ENCODE measurements at regions of chr11 and their contacts with region 1.

Region 1: DNA sequence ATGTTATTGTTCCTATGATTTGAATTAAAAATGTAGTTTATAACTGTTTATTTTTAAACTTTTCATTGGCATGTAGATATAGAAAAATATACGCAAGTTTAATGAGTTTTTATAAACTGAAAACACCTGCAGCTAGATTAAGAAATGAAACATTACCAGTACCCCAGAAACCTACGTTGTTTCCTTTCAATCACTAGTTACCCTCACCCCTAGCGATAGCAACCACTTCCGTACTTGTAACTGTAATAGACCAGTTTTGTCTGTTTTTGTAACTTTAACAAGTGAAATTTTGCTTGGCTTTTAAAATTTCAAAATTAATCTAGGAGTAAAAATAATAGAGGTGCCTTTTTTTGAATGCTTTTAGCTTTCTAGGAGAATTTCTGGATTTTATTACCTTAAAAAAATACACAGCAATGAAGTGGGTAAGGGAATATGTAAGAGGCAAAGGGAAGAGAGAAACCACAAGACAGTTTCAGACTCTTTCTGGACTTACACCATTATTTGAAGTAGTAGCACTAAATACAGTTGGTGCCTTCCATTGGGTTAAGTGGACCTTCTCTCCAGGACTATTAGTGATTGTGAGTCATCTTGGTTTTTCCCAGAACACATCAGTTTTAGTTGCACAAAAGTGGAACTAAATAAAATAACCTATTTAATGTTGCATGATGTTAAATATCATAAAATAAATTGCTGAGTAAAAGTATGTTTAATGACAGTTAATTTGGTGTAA is 18.7 kb upstream of the NAT10 start:
- DNase-seq: no peak
- H3K4me3 Mint-ChIP-seq: peak overlapping the region; percentile 32
- H3K27ac Mint-ChIP-seq: peak overlapping the region; percentile 85
- H3K4me1 Mint-ChIP-seq: peaks cover 15% of the 10 kb centered on the region
- H3K27me3 Mint-ChIP-seq: no peaks in the 10 kb centered on the region

Region 2: DNA sequence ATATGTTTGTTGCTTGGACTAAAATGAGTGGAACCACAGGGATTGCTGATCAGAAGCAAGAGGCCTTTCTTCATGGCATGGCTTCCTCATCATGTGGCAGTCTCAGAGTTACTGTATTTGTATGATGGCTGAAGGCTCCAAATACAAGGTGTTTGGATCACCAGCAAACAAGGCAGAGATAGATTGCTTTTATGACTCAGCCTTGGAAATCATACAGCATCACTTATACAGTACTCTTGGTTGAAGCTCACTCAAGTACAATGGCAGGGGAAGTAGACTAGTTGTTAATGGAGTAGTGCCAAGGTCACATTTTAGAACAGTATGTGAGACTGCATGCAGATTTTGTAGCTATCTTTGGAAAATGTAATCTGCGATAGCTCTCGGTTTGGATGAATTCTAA is 18.6 kb before region 1 on chr11:
- CTCF ChIA-PET with region 1: interaction called, 10 read pairs
- POLR2A ChIA-PET with region 1: no interaction called
- DNase-seq: no peak
- H3K4me3 Mint-ChIP-seq: no peak overlapping the region
- H3K27ac Mint-ChIP-seq: peak overlapping the region; percentile 9
- H3K4me1 Mint-ChIP-seq: peaks cover 54% of the 10 kb centered on the region
- H3K27me3 Mint-ChIP-seq: no peaks in the 10 kb centered on the region

Measured in activated CD4-positive, alpha-beta T cell treated with anti-CD3 and anti-CD28 coated beads, Interleukin-2, amount 10 ng/mL, durations not matched to agents 7 days and 5 days (primary cell).